Dorsolateral prefrontal cortex (tissue), 120 donors: ENCODE measurements at regions of chr1 and their contacts with region 1.

Region 1: GRCh38 chr1:9942939-9943788 is at the starts of genes LZIC and NMNAT1:
- DNase-seq: peak; percentile 90 to 95 (median 94)
- H3K4me3 ChIP-seq: peak within 1 kb of the TSS; percentile 70 to 99 (median 92)
- H3K27ac ChIP-seq: peak within 1 kb of the TSS; percentile 52 to 96 (median 85)
- H3K27me3 ChIP-seq: no peaks in the 10 kb centered on the region
- CTCF ChIP-seq: peak in 48 of 56 donors; percentile 2 to 68 (median 40)
- total RNA-seq, gene LZIC: 21.5 to 45.4 (median 31.9) TPM
- total RNA-seq, gene NMNAT1: 6.4 to 18.0 (median 10.1) TPM

Region 2: GRCh38 chr1:9996624-9997582 is 53.7 kb after region 1 on chr1 and contains the start of gene RBP7:
- intact Hi-C with region 1: loop called in 1 of 2 experiments (anchors 5 kb)
- DNase-seq: peak in 1 of 10 donors; percentile 48
- H3K4me3 ChIP-seq: peak within 1 kb of the TSS; percentile 37 to 78 (median 63)
- H3K27ac ChIP-seq: peak within 1 kb of the TSS in 43 of 59 donors; percentile 1 to 84 (median 58)
- H3K27me3 ChIP-seq: peaks cover 0 to 33% (median 14%) of the 10 kb centered on the region in 45 donors
- CTCF ChIP-seq: no peak
- total RNA-seq, gene RBP7: 1.1 to 45.6 (median 6.9) TPM in 118 of 120 experiments, not detected in the others